Activated CD4-positive, alpha-beta memory T cell treated with anti-CD3 and anti-CD28 coated beads, Interleukin-2, amount 10 ng/mL, durations not matched to agents 7 days and 5 days (primary cell): ENCODE measurements at regions of chr5 and their contacts with region 1.

Region 1: GRCh38 chr5:170225326-170226128 is 7.3 kb upstream of the C5orf58 start:
- DNase-seq: peak; percentile 80
- H3K4me3 Mint-ChIP-seq: no peak overlapping the region
- H3K27ac Mint-ChIP-seq: no peak overlapping the region
- H3K4me1 Mint-ChIP-seq: peaks cover 3% of the 10 kb centered on the region
- H3K27me3 Mint-ChIP-seq: no peaks in the 10 kb centered on the region

Region 2: DNA sequence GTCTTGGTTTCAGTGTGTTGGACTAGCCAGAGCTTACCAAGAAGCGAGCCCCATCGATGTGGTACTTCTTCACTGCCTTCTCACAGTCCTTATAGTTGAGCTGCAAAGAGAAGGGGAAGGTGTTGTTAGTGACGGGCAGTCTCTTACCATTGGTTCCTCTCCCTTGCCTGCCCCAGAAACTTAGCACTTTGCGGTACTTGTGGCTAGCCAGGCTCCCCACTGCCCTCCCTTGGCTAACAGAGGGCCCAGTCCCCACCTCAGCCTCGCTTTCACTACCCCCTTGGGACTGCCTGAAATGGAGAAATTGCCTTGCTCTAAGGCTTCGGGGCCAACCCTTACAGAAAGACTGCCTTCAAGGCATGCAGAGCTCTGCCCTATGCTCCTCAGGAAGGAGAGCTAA is 67.7 kb after region 1 on chr5:
- CTCF ChIA-PET with region 1: interaction called, 15 read pairs
- POLR2A ChIA-PET with region 1: no interaction called
- DNase-seq: peak; percentile 80
- H3K4me3 Mint-ChIP-seq: peak overlapping the region; percentile 99
- H3K27ac Mint-ChIP-seq: peak overlapping the region; percentile 96
- H3K4me1 Mint-ChIP-seq: peaks cover 70% of the 10 kb centered on the region
- H3K27me3 Mint-ChIP-seq: no peaks in the 10 kb centered on the region

Region 3: DNA sequence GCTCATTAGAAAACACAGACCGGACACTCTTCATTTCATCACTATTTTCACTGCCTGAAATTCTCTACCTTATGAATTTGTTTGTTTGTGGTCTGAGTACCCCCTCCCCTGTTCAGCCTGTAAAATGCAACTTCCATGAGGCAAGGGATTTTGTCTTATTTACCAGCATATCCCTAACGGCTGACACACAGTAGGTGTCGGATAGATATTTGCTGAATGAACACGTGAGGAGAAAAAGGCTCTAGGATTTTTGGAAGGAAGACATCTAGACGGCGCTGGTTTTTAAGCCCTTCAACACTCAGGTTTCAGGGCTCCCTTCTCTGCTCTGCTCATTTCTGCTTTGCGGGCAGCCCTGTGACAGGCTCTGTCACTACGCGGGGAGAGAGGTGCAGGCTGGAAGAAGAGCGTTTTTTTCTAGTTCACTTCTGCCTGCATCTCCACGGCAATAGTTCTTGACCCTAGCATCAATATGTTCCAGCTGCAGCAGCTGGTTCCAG is 122.7 kb after region 1 on chr5:
- CTCF ChIA-PET with region 1: interaction called, 13 read pairs
- POLR2A ChIA-PET with region 1: interaction called, 5 read pairs
- DNase-seq: no peak
- H3K4me3 Mint-ChIP-seq: no peak overlapping the region
- H3K27ac Mint-ChIP-seq: no peak overlapping the region
- H3K4me1 Mint-ChIP-seq: no peaks in the 10 kb centered on the region
- H3K27me3 Mint-ChIP-seq: peaks cover 50% of the 10 kb centered on the region

Region 4: DNA sequence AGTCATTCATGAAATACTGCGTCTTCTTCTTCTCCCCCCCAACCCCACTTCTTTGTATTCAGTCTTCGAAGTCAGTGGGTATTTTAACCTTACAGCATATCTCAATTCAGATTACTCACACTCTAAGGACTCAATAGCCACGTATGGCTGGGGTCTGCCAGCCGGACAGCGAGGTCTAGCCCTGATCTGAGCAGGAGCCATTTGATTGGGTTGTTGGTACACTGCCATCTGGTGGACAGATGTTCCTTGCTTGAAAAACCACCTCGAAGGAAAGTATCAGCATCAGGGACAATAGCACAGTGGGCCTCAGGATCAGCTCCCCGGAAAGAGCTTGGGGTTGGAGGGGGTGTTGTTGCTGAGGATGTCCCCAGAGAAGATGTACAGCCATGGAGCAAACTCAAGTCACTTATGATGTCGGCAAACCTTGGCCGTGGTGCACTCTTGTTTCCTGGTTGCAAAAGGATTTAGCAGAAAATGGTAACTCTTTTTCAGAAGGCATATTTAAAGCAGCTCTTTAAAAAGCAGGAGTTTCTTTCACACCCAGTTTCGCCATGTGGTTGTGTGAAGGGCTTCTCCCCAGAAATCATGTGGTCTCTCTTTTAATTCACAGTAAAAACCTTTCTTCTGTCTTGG is 195.4 kb after region 1 on chr5:
- CTCF ChIA-PET with region 1: interaction called, 100 read pairs
- POLR2A ChIA-PET with region 1: no interaction called
- DNase-seq: peak; percentile 51
- H3K4me3 Mint-ChIP-seq: no peak overlapping the region
- H3K27ac Mint-ChIP-seq: no peak overlapping the region
- H3K4me1 Mint-ChIP-seq: peaks cover 12% of the 10 kb centered on the region
- H3K27me3 Mint-ChIP-seq: peaks cover 20% of the 10 kb centered on the region